CD4-positive, alpha-beta T cell (primary cell): ENCODE measurements at regions of chr19 and their contacts with region 1.

Region 1: GRCh38 chr19:14136509-14137281 is at the start of gene ASF1B:
- DNase-seq: peak; percentile 91 to 99 (median 97)
- ATAC-seq: peak; percentile 80
- H3K4me3 ChIP-seq: peak within 1 kb of the TSS; percentile 86
- H3K4me3 Mint-ChIP-seq: peak within 1 kb of the TSS; percentile 97
- H3K27ac ChIP-seq: peak within 1 kb of the TSS; percentile 92 to 94
- H3K27ac Mint-ChIP-seq: peak within 1 kb of the TSS; percentile 87
- H3K4me1 ChIP-seq: peaks cover 34% of the 10 kb centered on the region
- H3K4me1 Mint-ChIP-seq: peaks cover 34% of the 10 kb centered on the region
- H3K27me3 ChIP-seq: no peaks in the 10 kb centered on the region
- H3K27me3 Mint-ChIP-seq: no peaks in the 10 kb centered on the region
- CTCF ChIP-seq: peak; percentile 99
- total RNA-seq, gene ASF1B: 0.59 to 0.77 TPM

Region 2: DNA sequence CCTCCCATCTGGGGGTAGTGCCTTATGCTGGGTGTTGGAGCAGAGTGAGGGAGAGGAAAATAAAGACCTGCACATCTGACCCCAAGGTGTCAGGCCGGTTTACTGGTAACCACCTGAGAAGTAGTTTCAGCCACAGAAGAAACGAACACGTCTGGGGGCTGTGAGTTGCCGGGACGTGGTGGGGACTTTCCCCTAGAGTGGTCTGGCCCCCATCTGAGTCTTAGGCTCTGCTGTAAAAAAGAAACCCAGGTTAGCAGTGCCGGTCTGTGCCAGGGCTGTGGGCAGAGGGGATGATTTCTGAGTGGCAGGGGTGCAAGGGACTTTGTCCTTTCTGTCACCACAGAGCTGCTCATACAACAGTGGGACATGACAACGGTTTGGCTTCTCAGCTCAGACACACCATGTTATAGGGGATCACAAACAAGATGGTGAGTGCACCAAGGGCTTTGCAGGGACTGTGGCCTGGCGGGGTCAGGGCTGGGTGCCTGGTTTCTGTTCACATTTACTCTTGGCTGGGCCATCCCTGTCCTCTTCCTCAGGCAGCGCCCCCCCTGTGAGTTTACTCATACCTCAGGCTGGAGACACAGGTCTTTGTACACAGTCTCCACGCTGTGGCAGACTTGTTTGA is 1236.7 kb before region 1 on chr19:
- CTCF ChIA-PET with region 1: no interaction called
- POLR2A ChIA-PET with region 1: no interaction called
- intact Hi-C with region 1: no loop called
- DNase-seq: no peak
- ATAC-seq: no peak
- H3K4me3 ChIP-seq: no peak overlapping the region
- H3K4me3 Mint-ChIP-seq: no peak overlapping the region
- H3K27ac ChIP-seq: no peak overlapping the region
- H3K27ac Mint-ChIP-seq: no peak overlapping the region
- H3K4me1 ChIP-seq: no peaks in the 10 kb centered on the region
- H3K4me1 Mint-ChIP-seq: no peaks in the 10 kb centered on the region
- H3K27me3 ChIP-seq: no peaks in the 10 kb centered on the region
- H3K27me3 Mint-ChIP-seq: no peaks in the 10 kb centered on the region
- CTCF ChIP-seq: no peak

Region 3: GRCh38 chr19:13665125-13665905 is 471.4 kb before region 1 on chr19:
- CTCF ChIA-PET with region 1: no interaction called
- POLR2A ChIA-PET with region 1: no interaction called
- intact Hi-C with region 1: no loop called
- DNase-seq: no peak
- ATAC-seq: no peak
- H3K4me3 ChIP-seq: no peak overlapping the region
- H3K4me3 Mint-ChIP-seq: no peak overlapping the region
- H3K27ac ChIP-seq: no peak overlapping the region
- H3K27ac Mint-ChIP-seq: no peak overlapping the region
- H3K4me1 ChIP-seq: no peaks in the 10 kb centered on the region
- H3K4me1 Mint-ChIP-seq: no peaks in the 10 kb centered on the region
- H3K27me3 ChIP-seq: no peaks in the 10 kb centered on the region
- H3K27me3 Mint-ChIP-seq: no peaks in the 10 kb centered on the region
- CTCF ChIP-seq: no peak

Region 4: DNA sequence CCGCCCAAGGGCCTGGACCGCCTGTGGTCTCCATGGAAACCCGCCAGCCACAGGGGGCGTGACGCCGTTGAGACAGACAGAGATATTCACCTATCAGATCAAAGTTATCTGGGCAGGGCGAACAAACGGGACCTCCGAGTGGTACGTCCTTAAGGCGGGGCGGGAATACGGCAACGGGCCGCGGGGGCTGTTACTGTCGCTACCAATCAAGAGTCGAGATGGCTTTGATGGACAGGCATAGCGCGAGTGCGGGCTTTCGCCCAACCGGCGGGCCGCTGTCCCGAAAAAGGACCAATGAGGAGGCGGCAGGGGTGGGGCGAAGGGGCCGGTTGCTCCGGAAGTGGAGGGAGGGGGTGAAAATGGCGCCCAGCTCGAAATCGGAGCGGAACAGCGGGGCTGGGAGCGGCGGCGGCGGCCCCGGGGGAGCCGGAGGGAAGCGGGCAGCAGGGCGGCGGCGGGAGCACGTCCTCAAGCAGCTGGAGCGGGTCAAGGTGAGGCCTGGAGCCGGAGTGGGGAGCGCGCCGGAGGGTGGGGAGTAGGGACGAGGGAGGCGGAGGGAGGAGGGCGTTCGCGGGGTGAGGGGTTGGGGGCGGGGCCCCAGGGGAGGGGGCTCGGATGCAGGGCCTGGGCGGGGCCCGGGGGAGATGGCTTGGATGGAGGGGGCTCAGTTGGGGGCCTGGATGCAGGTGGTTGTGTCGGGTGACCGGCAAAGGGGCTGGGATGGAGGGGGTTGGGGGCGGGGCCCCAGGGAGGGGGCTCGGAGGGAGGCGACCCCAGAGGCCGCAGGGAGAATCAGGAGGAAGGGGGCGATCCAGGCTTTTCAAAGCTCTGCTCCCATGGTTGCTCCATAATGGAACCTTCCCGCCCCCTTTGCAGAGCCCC is 184.3 kb before region 1 on chr19 and contains the start of gene DCAF15:
- CTCF ChIA-PET with region 1: no interaction called
- POLR2A ChIA-PET with region 1: interaction called, 10 read pairs
- intact Hi-C with region 1: no loop called
- DNase-seq: peak; percentile 96 to 100 (median 98)
- ATAC-seq: peak; percentile 97
- H3K4me3 ChIP-seq: peak within 1 kb of the TSS; percentile 82
- H3K4me3 Mint-ChIP-seq: peak within 1 kb of the TSS; percentile 100
- H3K27ac ChIP-seq: peak within 1 kb of the TSS; percentile 69 to 71
- H3K27ac Mint-ChIP-seq: peak within 1 kb of the TSS; percentile 97
- H3K4me1 ChIP-seq: peaks cover 30% of the 10 kb centered on the region
- H3K4me1 Mint-ChIP-seq: peaks cover 13% of the 10 kb centered on the region
- H3K27me3 ChIP-seq: no peaks in the 10 kb centered on the region
- H3K27me3 Mint-ChIP-seq: no peaks in the 10 kb centered on the region
- CTCF ChIP-seq: no peak
- total RNA-seq, gene DCAF15: 84.9 to 85.0 TPM

Region 5: DNA sequence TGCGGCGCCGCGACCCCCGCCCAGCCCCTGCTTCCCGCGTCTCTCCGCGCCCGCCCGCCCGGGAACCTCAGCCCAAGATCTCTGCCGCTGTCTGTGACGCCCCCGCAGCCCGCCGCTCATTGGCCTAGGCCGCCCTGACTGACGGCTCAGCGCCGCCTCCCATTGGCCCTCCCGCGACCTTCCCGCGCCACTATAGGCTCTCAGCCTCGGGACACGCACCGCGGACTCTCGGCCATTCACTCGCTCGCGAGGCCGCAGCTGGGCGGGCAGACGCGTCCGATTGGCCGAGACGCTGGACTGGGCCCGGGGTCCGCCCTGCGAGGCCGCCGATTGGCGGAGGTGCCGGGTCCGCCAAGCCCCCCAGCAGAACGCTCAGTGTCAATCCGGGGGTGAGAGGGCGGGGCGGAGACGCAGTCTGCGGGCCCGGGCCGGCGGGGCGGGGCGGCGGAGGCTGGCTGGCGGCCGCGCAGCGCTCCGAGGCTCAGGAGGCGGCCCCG is 19.0 kb before region 1 on chr19 and contains the start of gene PRKACA:
- CTCF ChIA-PET with region 1: interaction called, 18 read pairs
- POLR2A ChIA-PET with region 1: interaction called, 27 read pairs
- intact Hi-C with region 1: loop called (anchors 1 kb)
- DNase-seq: peak; percentile 94 to 99 (median 97)
- ATAC-seq: peak; percentile 87
- H3K4me3 ChIP-seq: peak within 1 kb of the TSS; percentile 86
- H3K4me3 Mint-ChIP-seq: peak within 1 kb of the TSS; percentile 97
- H3K27ac ChIP-seq: peak within 1 kb of the TSS; percentile 65 to 83
- H3K27ac Mint-ChIP-seq: peak within 1 kb of the TSS; percentile 93
- H3K4me1 ChIP-seq: peaks cover 59% of the 10 kb centered on the region
- H3K4me1 Mint-ChIP-seq: peaks cover 55% of the 10 kb centered on the region
- H3K27me3 ChIP-seq: no peaks in the 10 kb centered on the region
- H3K27me3 Mint-ChIP-seq: no peaks in the 10 kb centered on the region
- CTCF ChIP-seq: no peak
- total RNA-seq, gene PRKACA: 27.4 to 29.8 TPM

Region 6: GRCh38 chr19:14347999-14348889 is 211.5 kb after region 1 on chr19:
- CTCF ChIA-PET with region 1: interaction called, 34 read pairs
- POLR2A ChIA-PET with region 1: interaction called, 26 read pairs
- intact Hi-C with region 1: loop called in 1 of 2 experiments (anchors 1 kb)
- DNase-seq: peak; percentile 34 to 81 (median 59)
- ATAC-seq: peak; percentile 71
- H3K4me3 ChIP-seq: peak overlapping the region; percentile 20
- H3K4me3 Mint-ChIP-seq: no peak overlapping the region
- H3K27ac ChIP-seq: no peak overlapping the region
- H3K27ac Mint-ChIP-seq: no peak overlapping the region
- H3K4me1 ChIP-seq: peaks cover 31% of the 10 kb centered on the region
- H3K4me1 Mint-ChIP-seq: peaks cover 18% of the 10 kb centered on the region
- H3K27me3 ChIP-seq: no peaks in the 10 kb centered on the region
- H3K27me3 Mint-ChIP-seq: no peaks in the 10 kb centered on the region
- CTCF ChIP-seq: peak; percentile 96

Region 7: DNA sequence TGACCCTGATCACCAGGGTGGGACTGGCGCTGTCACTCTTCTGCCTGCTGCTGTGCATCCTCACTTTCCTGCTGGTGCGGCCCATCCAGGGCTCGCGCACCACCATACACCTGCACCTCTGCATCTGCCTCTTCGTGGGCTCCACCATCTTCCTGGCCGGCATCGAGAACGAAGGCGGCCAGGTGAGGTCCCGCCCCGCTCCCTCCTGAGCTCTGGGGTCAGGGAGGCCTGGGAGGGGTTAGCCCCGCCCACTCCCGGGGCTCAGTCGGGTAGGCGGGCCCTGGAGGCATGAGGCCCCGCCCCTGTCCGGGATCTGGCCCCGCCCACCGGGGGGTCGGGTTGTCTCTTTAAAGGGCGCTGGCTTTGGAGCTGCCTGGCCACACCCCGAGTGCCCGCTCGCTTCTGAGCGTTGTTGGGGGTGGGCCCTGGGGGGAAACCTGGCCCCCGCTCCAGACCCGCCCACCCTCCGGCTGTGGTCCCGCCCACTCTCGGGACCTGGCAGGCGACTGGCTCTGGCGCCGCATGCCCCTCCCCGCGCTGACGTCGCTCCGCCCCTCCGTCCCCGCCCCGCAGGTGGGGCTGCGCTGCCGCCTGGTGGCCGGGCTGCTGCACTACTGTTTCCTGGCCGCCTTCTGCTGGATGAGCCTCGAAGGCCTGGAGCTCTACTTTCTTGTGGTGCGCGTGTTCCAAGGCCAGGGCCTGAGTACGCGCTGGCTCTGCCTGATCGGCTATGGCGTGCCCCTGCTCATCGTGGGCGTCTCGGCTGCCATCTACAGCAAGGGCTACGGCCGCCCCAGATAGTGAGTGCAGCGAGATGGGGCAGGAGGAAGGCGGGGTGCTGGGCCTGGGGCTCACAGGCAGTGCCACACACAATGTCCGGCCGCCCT is 269.3 kb after region 1 on chr19:
- CTCF ChIA-PET with region 1: interaction called, 12 read pairs
- POLR2A ChIA-PET with region 1: interaction called, 18 read pairs
- intact Hi-C with region 1: loop called (anchors 1 to 2 kb)
- DNase-seq: peak; percentile 78 to 95 (median 86)
- ATAC-seq: peak; percentile 73
- H3K4me3 ChIP-seq: no peak overlapping the region
- H3K4me3 Mint-ChIP-seq: peak overlapping the region; percentile 69
- H3K27ac ChIP-seq: peak overlapping the region; percentile 22 to 56
- H3K27ac Mint-ChIP-seq: peak overlapping the region; percentile 92
- H3K4me1 ChIP-seq: peaks cover 66% of the 10 kb centered on the region
- H3K4me1 Mint-ChIP-seq: peaks cover 29% of the 10 kb centered on the region
- H3K27me3 ChIP-seq: no peaks in the 10 kb centered on the region
- H3K27me3 Mint-ChIP-seq: no peaks in the 10 kb centered on the region
- CTCF ChIP-seq: peak; percentile 85

Region 8: DNA sequence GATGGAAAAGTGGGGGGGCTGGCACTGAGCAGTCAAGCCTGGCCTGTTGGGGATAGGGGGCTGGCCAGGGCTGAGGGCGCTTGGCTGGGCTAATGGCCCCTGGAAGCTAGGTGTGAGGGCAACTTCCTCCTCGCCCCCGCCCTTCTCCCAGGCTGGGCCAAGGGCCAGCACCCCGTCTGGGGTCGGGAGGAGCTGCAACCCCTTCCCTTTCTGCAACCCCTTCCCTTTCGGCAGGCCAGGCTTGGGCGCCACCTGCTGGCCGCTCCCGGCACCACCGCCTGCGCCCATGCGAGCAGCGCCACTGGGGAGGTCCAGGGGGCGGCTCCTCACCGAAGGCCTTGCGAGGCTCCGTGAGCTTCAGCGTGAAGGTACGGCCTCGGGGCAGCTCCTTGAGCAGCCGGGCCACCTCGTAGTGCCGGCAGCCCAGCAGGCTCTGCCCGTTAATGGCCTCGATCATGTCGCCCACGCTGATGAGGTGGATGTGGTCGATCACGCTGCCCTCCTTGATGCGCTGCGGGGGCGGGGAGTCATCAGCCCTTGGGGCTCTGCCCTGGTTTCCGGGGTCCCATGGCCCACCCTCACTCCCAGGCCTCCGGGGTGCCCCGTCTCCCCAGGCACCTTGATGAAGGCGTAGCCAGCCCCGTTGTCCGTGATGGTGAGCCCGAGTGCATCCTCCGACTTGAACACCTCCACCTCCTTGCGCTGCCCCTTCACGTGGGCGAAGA is 343.4 kb after region 1 on chr19:
- CTCF ChIA-PET with region 1: interaction called, 3 read pairs
- POLR2A ChIA-PET with region 1: interaction called, 5 read pairs
- intact Hi-C with region 1: loop called (anchors 2 to 10 kb)
- DNase-seq: peak; percentile 45 to 82 (median 64)
- ATAC-seq: peak; percentile 62
- H3K4me3 ChIP-seq: no peak overlapping the region
- H3K4me3 Mint-ChIP-seq: no peak overlapping the region
- H3K27ac ChIP-seq: no peak overlapping the region
- H3K27ac Mint-ChIP-seq: no peak overlapping the region
- H3K4me1 ChIP-seq: peaks cover 21% of the 10 kb centered on the region
- H3K4me1 Mint-ChIP-seq: peaks cover 15% of the 10 kb centered on the region
- H3K27me3 ChIP-seq: peaks cover under 1 to 3% of the 10 kb centered on the region in 2 experiments
- H3K27me3 Mint-ChIP-seq: peaks cover 13% of the 10 kb centered on the region
- CTCF ChIP-seq: peak; percentile 87